ENCODE measurements at regions of chr18 and their contacts with region 1.

Region 1: DNA sequence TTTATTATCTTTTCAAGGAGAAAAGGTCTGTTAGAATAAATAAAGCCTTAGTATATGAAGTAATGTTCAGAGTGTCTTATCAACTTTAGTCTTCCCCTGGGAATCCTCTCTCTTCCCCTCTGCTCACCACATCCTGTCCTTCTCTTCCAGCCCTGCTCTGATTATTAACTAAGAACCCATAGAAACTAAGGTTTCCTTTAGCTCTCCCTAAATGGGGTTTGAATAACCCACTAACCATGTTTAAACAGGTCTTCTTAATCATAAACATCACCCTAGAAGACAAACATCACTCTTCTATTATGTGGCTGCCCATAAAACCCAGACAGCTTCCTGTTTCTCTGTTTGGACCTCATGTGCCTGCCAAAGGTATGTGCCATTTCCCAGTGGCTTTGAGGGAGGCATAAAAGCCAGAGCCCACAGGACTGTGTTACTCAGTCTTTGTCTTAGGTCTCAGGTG is 50.1 kb downstream of the SLC14A1 start:
- DNase-seq: peak; percentile 76
- ATAC-seq: peak; percentile 89
- H3K4me3 ChIP-seq: no peak overlapping the region
- H3K27ac ChIP-seq: peak overlapping the region; percentile 75
- H3K4me1 ChIP-seq: peaks cover 14% of the 10 kb centered on the region
- H3K27me3 ChIP-seq: no peaks in the 10 kb centered on the region
- CTCF ChIP-seq: no peak

Region 2: GRCh38 chr18:45722899-45723298 is 51.2 kb before region 1 on chr18:
- CTCF ChIA-PET with region 1: no interaction called
- POLR2A ChIA-PET with region 1: no interaction called
- intact Hi-C with region 1: loop called (anchors 5 kb)
- DNase-seq: peak; percentile 64
- ATAC-seq: peak; percentile 92
- H3K4me3 ChIP-seq: no peak overlapping the region
- H3K27ac ChIP-seq: no peak overlapping the region
- H3K4me1 ChIP-seq: peaks cover 7% of the 10 kb centered on the region; the same call in 1 of the 2 replicates
- H3K27me3 ChIP-seq: no peaks in the 10 kb centered on the region
- CTCF ChIP-seq: peak; percentile 53

Region 3: GRCh38 chr18:45793306-45793965 is 19.3 kb after region 1 on chr18:
- CTCF ChIA-PET with region 1: no interaction called
- POLR2A ChIA-PET with region 1: no interaction called
- intact Hi-C with region 1: loop called (anchors 1 kb)
- DNase-seq: peak; percentile 91
- ATAC-seq: peak; percentile 89
- H3K4me3 ChIP-seq: no peak overlapping the region
- H3K27ac ChIP-seq: peak overlapping the region; percentile 98
- H3K4me1 ChIP-seq: peaks cover 13% of the 10 kb centered on the region
- H3K27me3 ChIP-seq: no peaks in the 10 kb centered on the region
- CTCF ChIP-seq: no peak